Uterus (tissue), 4 donors: ENCODE measurements at regions of chr6 and their contacts with region 1.

Region 1: GRCh38 chr6:1604158-1605030 is 5.3 kb upstream of the FOXC1 start:
- DNase-seq: peak in 1 of 2 donors; percentile 58
- H3K4me3 ChIP-seq: peak overlapping the region in 1 of 2 donors; percentile 19
- H3K27ac ChIP-seq: no peak overlapping the region
- H3K4me1 ChIP-seq: peaks cover 0 to 11% of the 10 kb centered on the region in 2 donors
- H3K27me3 ChIP-seq: peaks cover 32 to 37% of the 10 kb centered on the region in 2 donors
- CTCF ChIP-seq: peak; percentile 85 to 93 (median 92)
- POLR2A ChIP-seq: peak in 1 of 2 donors; percentile 12

Region 2: DNA sequence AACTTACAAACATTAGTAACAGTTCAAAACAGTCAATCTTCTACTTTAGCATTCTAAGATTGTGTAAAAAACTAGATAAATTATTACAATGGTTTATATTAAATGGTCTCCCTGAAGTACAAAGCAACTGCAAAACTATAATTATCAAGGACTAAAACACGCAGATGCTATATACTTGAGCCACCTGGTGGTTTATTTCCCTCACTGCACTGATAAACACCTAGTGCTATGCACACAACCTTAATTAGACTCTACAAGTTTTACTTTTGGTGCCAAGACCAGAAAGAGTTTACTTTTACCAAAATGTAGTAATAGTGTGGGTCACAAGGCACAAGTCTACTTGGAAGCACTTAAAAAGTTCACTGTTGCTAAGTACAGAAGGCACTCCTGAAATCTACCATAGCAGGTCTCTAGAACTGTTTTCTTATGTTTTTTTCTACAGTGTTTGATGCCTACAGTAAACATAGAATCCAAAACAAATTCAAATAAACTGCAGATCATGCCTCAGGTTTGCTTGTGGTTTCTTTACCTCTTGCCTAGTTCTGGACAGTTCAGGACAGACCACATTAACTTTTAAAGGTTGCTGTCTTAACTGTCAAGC is 591.8 kb after region 1 on chr6:
- intact Hi-C with region 1: loop called (anchors 5 kb)
- DNase-seq: peak in 1 of 2 donors; percentile 37
- H3K4me3 ChIP-seq: no peak overlapping the region
- H3K27ac ChIP-seq: no peak overlapping the region
- H3K4me1 ChIP-seq: no peaks in the 10 kb centered on the region
- H3K27me3 ChIP-seq: no peaks in the 10 kb centered on the region
- CTCF ChIP-seq: peak; percentile 61 to 79 (median 66)
- POLR2A ChIP-seq: no peak

Region 3: DNA sequence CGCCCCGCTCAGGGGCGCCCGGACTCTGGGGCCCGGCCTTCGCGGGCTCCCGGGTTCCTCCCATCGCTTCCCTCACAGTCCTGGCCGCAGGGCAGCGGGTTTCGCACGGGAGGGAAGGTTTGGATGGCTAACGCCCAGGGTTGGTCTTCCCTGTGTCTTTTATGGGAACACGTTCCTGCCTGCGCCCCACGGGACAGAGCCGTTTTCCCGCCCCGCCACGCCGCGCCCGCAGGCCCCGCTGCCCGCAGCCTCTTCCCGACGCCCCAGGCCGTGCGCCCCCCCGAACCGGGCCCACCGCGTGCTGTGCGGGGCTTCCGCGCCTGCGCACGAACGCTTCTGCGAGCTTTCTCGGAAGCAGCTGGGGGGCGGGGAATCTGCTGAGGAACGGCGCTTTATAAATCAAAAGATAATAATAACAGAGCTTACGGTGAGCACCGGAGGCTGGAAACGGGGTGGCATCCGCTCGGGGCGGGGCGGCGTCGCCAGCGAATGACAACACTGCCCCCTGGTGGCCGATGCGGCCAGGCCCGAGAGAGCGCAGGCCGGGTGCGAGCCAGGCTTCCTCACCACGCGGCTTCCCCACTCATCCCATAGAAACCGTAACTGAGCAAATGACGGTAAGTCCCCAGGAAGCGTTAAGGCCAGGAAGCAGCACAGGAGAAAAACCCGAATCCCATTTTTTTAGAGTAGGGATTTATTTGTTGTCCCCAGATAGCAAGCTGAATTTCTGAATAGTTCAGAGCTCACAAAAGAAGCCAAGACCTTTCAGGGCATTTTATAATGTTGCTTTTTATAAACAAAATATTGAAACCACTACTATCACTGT is 1030.0 kb after region 1 on chr6:
- intact Hi-C with region 1: loop called (anchors 5 kb)
- DNase-seq: peak; percentile 81 to 86
- H3K4me3 ChIP-seq: peak overlapping the region; percentile 22 to 46
- H3K27ac ChIP-seq: peak overlapping the region; percentile 33 to 53
- H3K4me1 ChIP-seq: no peaks in the 10 kb centered on the region
- H3K27me3 ChIP-seq: no peaks in the 10 kb centered on the region
- CTCF ChIP-seq: peak; percentile 92 to 98 (median 94)
- POLR2A ChIP-seq: no peak